Right ventricle myocardium inferior (tissue), 1 donor: ENCODE measurements at regions of chr10 and their contacts with region 1.

Region 1: GRCh38 chr10:63217120-63217605 is 84.0 kb downstream of the NRBF2 start:
- DNase-seq: no peak
- ATAC-seq: peak; percentile 86

Region 2: GRCh38 chr10:63236113-63236935 is 19.2 kb after region 1 on chr10:
- intact Hi-C with region 1: no loop called
- DNase-seq: no peak
- ATAC-seq: no peak

Region 3: DNA sequence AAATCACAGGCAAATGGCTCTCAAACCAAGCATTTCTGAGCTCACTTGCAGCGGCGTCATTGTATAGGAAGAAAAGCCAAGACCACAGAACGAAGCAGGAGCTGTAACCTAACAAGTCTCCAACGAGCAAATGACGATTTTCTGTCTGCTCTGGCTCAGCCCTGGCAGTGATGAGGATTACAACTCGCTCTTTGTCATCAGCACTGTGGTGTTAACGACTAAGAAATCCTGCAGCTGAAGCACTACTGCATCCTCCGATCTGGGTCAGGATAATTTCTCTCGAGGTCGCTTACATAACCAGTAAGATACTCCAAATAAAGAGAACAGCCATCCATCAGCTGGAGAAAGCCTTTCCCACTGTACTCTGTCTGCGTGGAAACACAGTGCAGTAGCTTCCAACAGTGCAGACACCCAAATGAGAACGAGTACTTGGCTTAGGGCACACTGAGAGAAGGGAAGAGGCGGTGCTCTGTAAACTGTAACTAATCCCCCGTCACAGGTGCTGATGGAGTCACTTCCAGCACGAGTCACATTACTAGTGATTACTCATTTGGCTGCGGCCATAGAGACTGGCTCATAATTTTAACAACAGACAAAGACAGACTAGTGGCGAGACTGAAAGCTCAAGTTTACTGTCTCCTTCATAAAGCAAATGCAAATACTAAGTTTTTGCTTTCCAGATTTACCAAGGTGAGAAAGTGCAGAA is 51.8 kb after region 1 on chr10:
- intact Hi-C with region 1: loop called (anchors 2 kb)
- DNase-seq: peak; percentile 79
- ATAC-seq: peak; percentile 98

Region 4: GRCh38 chr10:63465293-63466143 is 248.4 kb after region 1 on chr10 and contains the start of gene JMJD1C:
- intact Hi-C with region 1: loop called (anchors 5 kb)
- DNase-seq: peak; percentile 91
- ATAC-seq: peak; percentile 93
- total RNA-seq, gene JMJD1C: 38.1 TPM

Region 5: DNA sequence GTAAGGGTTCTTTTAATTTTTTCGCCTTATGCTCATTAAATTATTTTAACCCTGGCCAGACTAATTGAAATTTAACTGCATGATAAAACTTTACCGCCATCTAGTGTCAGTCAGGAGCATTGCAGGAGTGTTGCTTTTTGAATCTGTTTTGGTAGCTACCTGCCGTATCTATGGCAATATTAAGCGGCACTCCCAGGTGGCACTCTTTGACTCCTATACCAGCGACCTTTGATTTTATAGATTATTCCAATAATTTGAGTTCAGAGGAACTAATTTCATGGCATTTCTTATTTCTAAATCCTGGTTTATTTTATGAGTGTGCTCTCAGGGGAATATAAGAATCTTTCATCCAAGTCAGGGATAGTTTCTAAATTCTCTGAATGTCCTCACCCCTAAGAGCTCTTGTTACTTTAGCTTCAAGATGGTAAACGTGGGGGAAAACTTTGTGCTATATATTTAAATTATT is 502.9 kb after region 1 on chr10:
- intact Hi-C with region 1: loop called (anchors 2 kb)
- DNase-seq: no peak
- ATAC-seq: peak; percentile 44